Dorsolateral prefrontal cortex (tissue), 120 donors: ENCODE measurements at regions of chr1 and their contacts with region 1.

Region 1: GRCh38 chr1:162136760-162137159 is 67.3 kb downstream of the NOS1AP start:
- DNase-seq: no peak
- H3K4me3 ChIP-seq: no peak overlapping the region
- H3K27ac ChIP-seq: peak overlapping the region in 1 of 59 donors; percentile 23
- H3K27me3 ChIP-seq: no peaks in the 10 kb centered on the region
- CTCF ChIP-seq: no peak

Region 2: DNA sequence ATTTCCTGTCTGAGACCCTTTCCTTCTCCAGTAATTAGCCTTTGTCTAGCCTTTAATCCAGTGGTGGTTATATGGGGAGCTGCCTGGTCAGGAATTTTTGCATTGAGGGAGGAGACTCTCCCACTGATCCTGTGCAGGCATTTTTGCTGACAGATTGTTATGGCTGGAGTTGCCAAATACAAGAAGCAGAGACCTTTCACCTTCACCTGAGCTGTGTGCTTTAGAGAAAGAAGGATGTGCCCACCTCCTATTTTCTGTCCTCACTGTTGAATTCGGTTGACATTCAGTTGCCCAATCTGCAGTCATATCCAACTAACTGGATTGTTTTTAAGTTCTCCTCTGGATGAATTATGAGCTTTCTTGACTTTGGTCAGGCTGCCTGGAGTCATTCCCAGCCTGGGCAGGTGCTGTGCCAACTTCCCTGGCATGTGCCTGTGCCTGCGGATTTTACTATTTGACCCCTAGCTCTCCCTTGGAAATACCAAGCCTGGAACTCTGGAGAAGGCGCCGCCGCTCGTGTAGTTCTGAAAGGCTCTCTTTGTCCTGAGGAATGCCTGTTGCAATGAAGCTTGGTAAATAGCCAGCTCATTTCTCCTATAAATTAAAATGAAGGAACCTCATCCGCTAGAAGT is 76.6 kb after region 1 on chr1:
- intact Hi-C with region 1: loop called in 1 of 2 experiments (anchors 5 kb)
- DNase-seq: peak in 5 of 10 donors; percentile 14 to 57 (median 47)
- H3K4me3 ChIP-seq: peak overlapping the region in 1 of 59 donors; percentile 32
- H3K27ac ChIP-seq: peak overlapping the region in 4 of 59 donors; percentile 11 to 31 (median 21)
- H3K27me3 ChIP-seq: no peaks in the 10 kb centered on the region
- CTCF ChIP-seq: no peak

Region 3: GRCh38 chr1:163056840-163057239 is 920.1 kb after region 1 on chr1:
- intact Hi-C with region 1: no loop called
- DNase-seq: no peak
- H3K4me3 ChIP-seq: no peak overlapping the region
- H3K27ac ChIP-seq: no peak overlapping the region
- H3K27me3 ChIP-seq: no peaks in the 10 kb centered on the region
- CTCF ChIP-seq: no peak